ENCODE measurements at regions of chr9 and their contacts with region 1.

Region 1: GRCh38 chr9:75483636-75484035 is 395.3 kb downstream of the OSTF1 start:
- DNase-seq: no peak
- H3K4me3 ChIP-seq: no peak overlapping the region
- H3K27ac ChIP-seq: no peak overlapping the region
- H3K4me1 ChIP-seq: no peaks in the 10 kb centered on the region
- H3K27me3 ChIP-seq: no peaks in the 10 kb centered on the region
- CTCF ChIP-seq: no peak
- POLR2A ChIP-seq: no peak

Region 2: DNA sequence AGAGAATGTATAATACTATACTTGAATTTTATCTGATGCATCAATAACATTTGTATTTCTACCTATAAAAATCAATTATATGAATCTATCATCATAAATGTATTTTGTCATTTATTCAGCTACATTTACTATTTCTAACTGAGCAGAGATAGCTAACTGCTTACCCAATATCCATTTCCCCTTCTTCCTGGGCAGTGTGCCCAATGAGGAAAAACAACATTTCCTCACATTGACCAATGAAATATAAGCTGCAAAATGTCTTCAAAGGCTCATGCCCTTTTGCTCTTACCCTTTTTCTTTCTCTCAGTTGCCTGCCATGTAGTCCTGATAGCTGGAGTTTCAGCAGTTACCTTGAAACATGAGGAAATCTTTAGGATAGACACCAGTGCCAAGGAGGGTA is 21.1 kb after region 1 on chr9:
- intact Hi-C with region 1: loop called (anchors 1 kb)
- DNase-seq: no peak
- H3K4me3 ChIP-seq: no peak overlapping the region
- H3K27ac ChIP-seq: no peak overlapping the region
- H3K4me1 ChIP-seq: peaks cover 11% of the 10 kb centered on the region
- H3K27me3 ChIP-seq: no peaks in the 10 kb centered on the region
- CTCF ChIP-seq: no peak
- POLR2A ChIP-seq: no peak

Region 3: DNA sequence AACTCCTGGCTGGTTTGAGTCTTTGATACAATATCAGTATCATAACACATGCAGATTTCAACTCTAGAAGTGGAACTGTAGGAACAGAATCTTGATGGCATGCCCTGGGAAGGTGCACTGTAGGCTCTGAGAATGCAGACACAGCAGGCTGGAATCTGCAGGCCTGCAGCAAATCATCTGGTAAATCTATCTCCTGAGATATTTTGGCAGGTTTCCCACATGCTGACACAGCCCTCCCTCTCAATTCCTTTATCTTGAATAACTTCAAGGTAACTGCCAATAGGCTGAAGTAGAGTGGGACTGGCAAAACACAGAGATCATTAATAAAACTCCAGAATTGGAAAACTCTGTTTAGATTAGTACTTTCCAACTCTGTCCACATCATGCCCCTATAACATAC is 229.1 kb after region 1 on chr9:
- intact Hi-C with region 1: no loop called
- DNase-seq: no peak
- H3K4me3 ChIP-seq: no peak overlapping the region
- H3K27ac ChIP-seq: no peak overlapping the region
- H3K4me1 ChIP-seq: no peaks in the 10 kb centered on the region
- H3K27me3 ChIP-seq: no peaks in the 10 kb centered on the region
- CTCF ChIP-seq: no peak
- POLR2A ChIP-seq: no peak